ENCODE measurements at regions of chr1 and their contacts with region 1.

Region 1: GRCh38 chr1:178542560-178543356 is 29.8 kb downstream of the TEX35 start:
- DNase-seq: peak; percentile 68 to 96 (median 85)
- ATAC-seq: peak; percentile 92
- H3K4me3 ChIP-seq: peak overlapping the region; percentile 75 to 92
- H3K4me3 Mint-ChIP-seq: peak overlapping the region; percentile 90
- H3K27ac ChIP-seq: peak overlapping the region in 1 of 2 experiments; percentile 22
- H3K27ac Mint-ChIP-seq: peak overlapping the region; percentile 62
- H3K4me1 ChIP-seq: peaks cover 11% of the 10 kb centered on the region
- H3K4me1 Mint-ChIP-seq: peaks cover 9% of the 10 kb centered on the region
- H3K27me3 ChIP-seq: no peaks in the 10 kb centered on the region
- H3K27me3 Mint-ChIP-seq: no peaks in the 10 kb centered on the region
- CTCF ChIP-seq: peak; percentile 98

Region 2: GRCh38 chr1:178220094-178220493 is 322.7 kb before region 1 on chr1:
- CTCF ChIA-PET with region 1: no interaction called
- POLR2A ChIA-PET with region 1: no interaction called
- intact Hi-C with region 1: no loop called
- DNase-seq: no peak
- ATAC-seq: no peak
- H3K4me3 ChIP-seq: no peak overlapping the region
- H3K4me3 Mint-ChIP-seq: no peak overlapping the region
- H3K27ac ChIP-seq: no peak overlapping the region
- H3K27ac Mint-ChIP-seq: no peak overlapping the region
- H3K4me1 ChIP-seq: no peaks in the 10 kb centered on the region
- H3K4me1 Mint-ChIP-seq: no peaks in the 10 kb centered on the region
- H3K27me3 ChIP-seq: no peaks in the 10 kb centered on the region
- H3K27me3 Mint-ChIP-seq: no peaks in the 10 kb centered on the region
- CTCF ChIP-seq: no peak

Region 3: GRCh38 chr1:178532392-178532791 is 10.4 kb before region 1 on chr1:
- CTCF ChIA-PET with region 1: interaction called, 48 read pairs
- POLR2A ChIA-PET with region 1: no interaction called
- intact Hi-C with region 1: loop called in 1 of 2 experiments (anchors 1 kb)
- DNase-seq: peak; percentile 48 to 86 (median 72)
- ATAC-seq: peak; percentile 73
- H3K4me3 ChIP-seq: no peak overlapping the region
- H3K4me3 Mint-ChIP-seq: no peak overlapping the region
- H3K27ac ChIP-seq: no peak overlapping the region
- H3K27ac Mint-ChIP-seq: no peak overlapping the region
- H3K4me1 ChIP-seq: peaks cover 6% of the 10 kb centered on the region
- H3K4me1 Mint-ChIP-seq: peaks cover 4% of the 10 kb centered on the region
- H3K27me3 ChIP-seq: no peaks in the 10 kb centered on the region
- H3K27me3 Mint-ChIP-seq: peaks cover 2% of the 10 kb centered on the region
- CTCF ChIP-seq: peak; percentile 92

Region 4: DNA sequence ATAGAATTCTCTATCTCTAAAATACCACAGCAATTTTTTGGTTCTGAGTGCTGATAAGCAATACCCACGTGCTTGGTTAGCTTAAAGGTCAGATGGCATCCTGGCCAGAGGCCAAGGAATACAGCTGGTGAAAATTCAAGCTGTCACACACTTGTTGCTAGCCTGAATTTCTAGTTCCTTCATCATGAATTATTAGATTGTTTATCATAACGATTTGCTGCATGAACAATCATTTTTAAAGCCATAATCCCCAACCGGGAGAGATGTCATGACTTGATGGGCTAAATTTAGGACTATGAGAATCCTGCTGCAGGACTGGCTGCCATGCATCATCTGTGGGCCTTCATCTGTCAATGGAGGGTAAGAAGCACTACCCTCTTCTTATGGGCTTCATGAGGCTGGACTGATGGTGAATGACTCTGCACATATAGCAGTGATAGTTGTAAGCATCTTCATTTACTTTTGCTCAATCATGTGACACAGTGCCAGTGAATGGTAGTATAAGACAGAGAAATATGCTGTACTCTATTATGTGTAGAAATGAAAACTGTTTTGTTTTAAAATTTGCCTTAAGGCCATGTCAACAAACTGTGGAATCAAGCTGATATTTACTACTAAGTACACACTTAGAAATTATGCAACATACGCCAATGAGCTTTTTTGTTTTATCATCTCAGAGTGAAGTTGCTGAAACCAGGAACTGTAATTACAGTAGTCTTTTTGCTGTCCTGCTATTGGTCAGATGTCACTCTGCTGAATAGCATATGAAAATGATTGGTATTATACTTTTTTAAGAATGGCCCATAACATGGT is 101.8 kb after region 1 on chr1:
- CTCF ChIA-PET with region 1: no interaction called
- POLR2A ChIA-PET with region 1: no interaction called
- intact Hi-C with region 1: no loop called
- DNase-seq: no peak
- ATAC-seq: no peak
- H3K4me3 ChIP-seq: no peak overlapping the region
- H3K4me3 Mint-ChIP-seq: no peak overlapping the region
- H3K27ac ChIP-seq: no peak overlapping the region
- H3K27ac Mint-ChIP-seq: no peak overlapping the region
- H3K4me1 ChIP-seq: no peaks in the 10 kb centered on the region
- H3K4me1 Mint-ChIP-seq: no peaks in the 10 kb centered on the region
- H3K27me3 ChIP-seq: no peaks in the 10 kb centered on the region
- H3K27me3 Mint-ChIP-seq: peaks cover 10% of the 10 kb centered on the region
- CTCF ChIP-seq: no peak

Region 5: DNA sequence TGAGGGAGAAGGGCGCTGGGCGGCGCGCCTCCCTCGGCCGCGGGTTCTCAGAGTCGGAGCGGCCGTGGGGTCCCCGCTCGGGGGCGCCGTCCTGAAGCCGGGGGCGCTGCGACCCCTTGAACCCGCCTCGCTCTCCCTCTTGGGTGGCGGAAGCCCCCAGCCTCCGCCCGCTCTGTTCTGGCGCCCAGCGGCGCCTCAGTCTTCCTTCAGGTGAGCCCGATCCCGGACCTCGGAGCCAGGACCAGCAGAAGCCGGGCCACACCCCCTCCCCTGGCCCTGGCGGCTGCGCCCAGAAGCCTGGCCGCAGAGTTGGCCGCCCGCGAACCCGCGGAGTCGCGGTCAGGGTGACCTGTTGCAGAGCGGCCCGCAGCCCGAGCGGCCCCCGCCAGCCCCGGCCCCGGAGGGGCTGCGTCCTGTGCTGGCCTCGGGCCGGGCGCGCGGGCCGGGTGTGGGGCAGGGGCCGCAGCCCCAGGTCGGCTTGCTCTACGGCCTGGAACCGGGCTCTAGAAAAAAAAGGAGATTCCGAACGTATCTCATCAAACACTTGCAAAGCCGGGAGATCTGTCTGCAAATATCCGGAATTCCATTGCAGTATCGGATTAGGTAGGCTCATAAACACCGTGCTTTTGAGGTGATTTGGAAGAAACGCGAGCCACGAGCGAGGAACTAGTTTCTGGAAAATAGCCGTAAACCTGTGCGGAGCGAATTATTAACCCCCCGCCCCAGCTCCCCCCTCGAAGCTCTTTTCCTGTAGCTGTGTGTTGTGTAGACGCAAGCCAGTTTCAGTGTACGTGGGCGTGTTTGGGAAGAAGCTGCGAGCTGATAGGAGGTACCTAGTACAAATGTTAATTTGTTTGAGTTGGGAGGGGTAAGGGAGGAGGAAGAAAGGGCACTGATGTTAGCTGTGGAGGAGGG is 183.1 kb after region 1 on chr1:
- CTCF ChIA-PET with region 1: no interaction called
- POLR2A ChIA-PET with region 1: no interaction called
- intact Hi-C with region 1: loop called in 1 of 2 experiments (anchors 1 kb)
- DNase-seq: peak in 8 of 9 experiments; percentile 31 to 85 (median 62)
- ATAC-seq: peak; percentile 81
- H3K4me3 ChIP-seq: peak overlapping the region; percentile 67 to 90
- H3K4me3 Mint-ChIP-seq: peak overlapping the region; percentile 85
- H3K27ac ChIP-seq: peak overlapping the region; percentile 58 to 69
- H3K27ac Mint-ChIP-seq: peak overlapping the region; percentile 75
- H3K4me1 ChIP-seq: peaks cover 10% of the 10 kb centered on the region
- H3K4me1 Mint-ChIP-seq: peaks cover 23% of the 10 kb centered on the region
- H3K27me3 ChIP-seq: no peaks in the 10 kb centered on the region
- H3K27me3 Mint-ChIP-seq: peaks cover 3% of the 10 kb centered on the region
- CTCF ChIP-seq: no peak

Measured in CD8-positive, alpha-beta T cell (primary cell).